GM12878 (cell line): ENCODE measurements at regions of chr11 and their contacts with region 1.

Region 1: GRCh38 chr11:107565219-107565937 is at the start of gene ALKBH8:
- DNase-seq: peak; percentile 50
- ATAC-seq: peak; percentile 89
- H3K4me3 ChIP-seq: peak within 1 kb of the TSS; percentile 71
- H3K27ac ChIP-seq: peak within 1 kb of the TSS; percentile 89
- H3K4me1 ChIP-seq: peaks cover 25% of the 10 kb centered on the region
- H3K27me3 ChIP-seq: no peaks in the 10 kb centered on the region
- CTCF ChIP-seq: no peak; a peak in 1 of 6 replicates
- EP300 ChIP-seq: no peak
- POLR2A ChIP-seq: peak; percentile 73
- RAD21 ChIP-seq: no peak
- polyA plus RNA-seq, gene ALKBH8: 4.6 to 4.7 TPM

Region 2: GRCh38 chr11:107598225-107599139 is 33.1 kb after region 1 on chr11:
- CTCF ChIA-PET with region 1: interaction called, 13 read pairs
- POLR2A ChIA-PET with region 1: no interaction called
- RAD21 ChIA-PET with region 1: no interaction called
- SMC1A ChIA-PET with region 1: interaction called, 5 read pairs
- in situ Hi-C with region 1: no loop called
- intact Hi-C with region 1: no loop called
- DNase-seq: no peak
- ATAC-seq: peak; percentile 99
- H3K4me3 ChIP-seq: no peak overlapping the region
- H3K27ac ChIP-seq: no peak overlapping the region
- H3K4me1 ChIP-seq: no peaks in the 10 kb centered on the region
- H3K27me3 ChIP-seq: peaks cover 0 to 4% of the 10 kb centered on the region in 2 experiments; a peak in 1 of 4 replicates
- CTCF ChIP-seq: peak; percentile 60 to 77 (median 66)
- EP300 ChIP-seq: no peak
- POLR2A ChIP-seq: no peak
- RAD21 ChIP-seq: 0 out of 2 replicates have a peak, but pooled peaks have one; percentile 25

Region 3: DNA sequence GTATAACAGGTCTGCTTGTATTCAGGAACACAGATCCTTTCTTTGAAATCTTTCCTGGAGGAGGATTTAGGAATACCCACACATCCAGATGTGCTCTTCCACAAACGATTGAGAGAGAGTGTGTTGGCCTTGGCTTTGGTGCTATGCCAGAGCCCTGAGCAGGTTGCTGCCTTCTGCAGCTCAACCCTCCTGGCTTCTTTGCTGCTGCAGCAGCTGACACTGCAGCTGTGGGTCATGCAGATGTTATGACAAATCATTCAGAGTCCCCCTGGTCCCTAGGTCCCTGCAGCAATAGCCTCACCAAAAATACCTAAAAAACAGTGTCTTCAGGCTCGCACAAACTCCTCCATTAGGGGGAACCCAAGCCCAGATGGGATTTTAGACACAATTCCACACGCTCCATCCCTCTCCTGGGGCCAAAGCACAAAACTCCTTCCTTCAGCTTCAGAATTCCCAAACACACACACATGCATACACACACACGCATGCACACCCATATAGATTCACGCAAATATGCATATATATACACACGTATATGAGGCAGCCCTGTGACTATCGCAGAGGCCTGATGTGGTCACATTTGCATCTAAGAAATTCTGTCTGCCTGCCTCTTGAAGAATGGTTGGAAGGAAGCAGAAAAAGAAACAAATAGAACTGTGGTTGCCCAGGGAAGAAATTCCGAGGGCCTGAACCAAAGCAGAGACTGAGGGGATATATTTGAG is 111.1 kb after region 1 on chr11:
- CTCF ChIA-PET with region 1: interaction called, 40 read pairs
- POLR2A ChIA-PET with region 1: interaction called, 5 read pairs
- RAD21 ChIA-PET with region 1: interaction called, 4 read pairs
- SMC1A ChIA-PET with region 1: interaction called, 249 read pairs
- in situ Hi-C with region 1: no loop called
- intact Hi-C with region 1: no loop called
- DNase-seq: no peak
- ATAC-seq: peak; percentile 29
- H3K4me3 ChIP-seq: no peak overlapping the region
- H3K27ac ChIP-seq: no peak overlapping the region
- H3K4me1 ChIP-seq: no peaks in the 10 kb centered on the region
- H3K27me3 ChIP-seq: no peaks in the 10 kb centered on the region
- CTCF ChIP-seq: no peak
- EP300 ChIP-seq: no peak
- POLR2A ChIP-seq: no peak
- RAD21 ChIP-seq: no peak

Region 4: GRCh38 chr11:107741044-107741823 is 175.9 kb after region 1 on chr11:
- CTCF ChIA-PET with region 1: interaction called, 10 read pairs
- POLR2A ChIA-PET with region 1: no interaction called
- RAD21 ChIA-PET with region 1: interaction called, 8 read pairs
- SMC1A ChIA-PET with region 1: interaction called, 9 read pairs
- in situ Hi-C with region 1: no loop called
- intact Hi-C with region 1: no loop called
- DNase-seq: peak; percentile 25
- ATAC-seq: peak; percentile 98
- H3K4me3 ChIP-seq: no peak overlapping the region
- H3K27ac ChIP-seq: no peak overlapping the region
- H3K4me1 ChIP-seq: no peaks in the 10 kb centered on the region
- H3K27me3 ChIP-seq: no peaks in the 10 kb centered on the region
- CTCF ChIP-seq: peak; percentile 80 to 92 (median 87)
- EP300 ChIP-seq: no peak
- POLR2A ChIP-seq: no peak
- RAD21 ChIP-seq: peak; percentile 81

Region 5: DNA sequence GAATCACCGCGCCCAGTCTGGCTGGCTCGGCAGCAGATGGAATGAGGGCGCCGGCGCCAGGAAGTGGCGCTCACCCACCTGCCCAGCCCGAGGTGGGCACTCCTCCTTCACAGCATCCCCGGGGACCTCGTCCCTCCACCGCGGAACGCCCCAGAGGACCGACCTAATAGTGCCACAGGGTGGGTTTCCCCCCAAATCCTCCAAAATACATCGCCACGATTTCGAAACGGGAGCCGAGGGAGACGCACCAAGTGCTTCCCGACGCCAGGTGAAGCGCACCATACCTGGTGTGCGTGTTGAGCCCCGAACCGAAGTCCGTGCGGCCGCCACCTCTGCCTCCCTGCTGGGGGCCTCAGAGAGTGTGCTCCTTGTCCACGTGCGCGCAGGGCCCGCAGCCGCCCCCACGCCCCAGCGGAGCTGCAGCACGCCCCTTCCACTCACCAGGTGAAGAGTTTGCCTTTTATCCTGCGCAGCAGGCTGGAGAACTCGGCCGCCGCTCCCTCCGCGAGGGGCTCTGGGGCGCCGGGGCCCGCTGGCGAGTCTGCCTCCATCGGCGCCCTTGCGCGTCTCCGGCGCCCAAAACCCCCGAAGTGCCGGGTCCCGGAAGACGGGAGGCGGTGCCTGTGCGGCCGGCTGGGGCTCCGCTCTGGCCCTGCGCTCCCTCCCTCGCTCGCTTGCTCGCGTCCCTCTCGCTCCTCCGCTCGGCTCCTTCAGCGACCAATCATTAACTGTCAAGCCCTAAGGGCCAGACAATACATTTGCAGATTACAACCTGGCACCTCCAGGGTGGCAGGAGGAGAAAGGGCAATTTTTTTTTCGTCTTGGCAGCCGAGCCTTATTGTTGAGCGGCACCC is 293.1 kb after region 1 on chr11 and contains the start of gene SLC35F2:
- CTCF ChIA-PET with region 1: no interaction called
- POLR2A ChIA-PET with region 1: no interaction called
- RAD21 ChIA-PET with region 1: interaction called, 3 read pairs
- SMC1A ChIA-PET with region 1: no interaction called
- in situ Hi-C with region 1: no loop called
- intact Hi-C with region 1: loop called (anchors 2 kb)
- DNase-seq: peak; percentile 80
- ATAC-seq: peak; percentile 92
- H3K4me3 ChIP-seq: peak within 1 kb of the TSS; percentile 93
- H3K27ac ChIP-seq: peak within 1 kb of the TSS; percentile 66
- H3K4me1 ChIP-seq: peaks cover 11% of the 10 kb centered on the region; the same call in 1 of the 2 replicates
- H3K27me3 ChIP-seq: no peaks in the 10 kb centered on the region
- CTCF ChIP-seq: peak in 2 of 3 experiments; percentile 12 to 19; a peak in 3 of 6 replicates
- EP300 ChIP-seq: no peak
- POLR2A ChIP-seq: peak; percentile 90
- RAD21 ChIP-seq: no peak
- polyA plus RNA-seq, gene SLC35F2: 15.2 to 25.8 TPM

Region 6: DNA sequence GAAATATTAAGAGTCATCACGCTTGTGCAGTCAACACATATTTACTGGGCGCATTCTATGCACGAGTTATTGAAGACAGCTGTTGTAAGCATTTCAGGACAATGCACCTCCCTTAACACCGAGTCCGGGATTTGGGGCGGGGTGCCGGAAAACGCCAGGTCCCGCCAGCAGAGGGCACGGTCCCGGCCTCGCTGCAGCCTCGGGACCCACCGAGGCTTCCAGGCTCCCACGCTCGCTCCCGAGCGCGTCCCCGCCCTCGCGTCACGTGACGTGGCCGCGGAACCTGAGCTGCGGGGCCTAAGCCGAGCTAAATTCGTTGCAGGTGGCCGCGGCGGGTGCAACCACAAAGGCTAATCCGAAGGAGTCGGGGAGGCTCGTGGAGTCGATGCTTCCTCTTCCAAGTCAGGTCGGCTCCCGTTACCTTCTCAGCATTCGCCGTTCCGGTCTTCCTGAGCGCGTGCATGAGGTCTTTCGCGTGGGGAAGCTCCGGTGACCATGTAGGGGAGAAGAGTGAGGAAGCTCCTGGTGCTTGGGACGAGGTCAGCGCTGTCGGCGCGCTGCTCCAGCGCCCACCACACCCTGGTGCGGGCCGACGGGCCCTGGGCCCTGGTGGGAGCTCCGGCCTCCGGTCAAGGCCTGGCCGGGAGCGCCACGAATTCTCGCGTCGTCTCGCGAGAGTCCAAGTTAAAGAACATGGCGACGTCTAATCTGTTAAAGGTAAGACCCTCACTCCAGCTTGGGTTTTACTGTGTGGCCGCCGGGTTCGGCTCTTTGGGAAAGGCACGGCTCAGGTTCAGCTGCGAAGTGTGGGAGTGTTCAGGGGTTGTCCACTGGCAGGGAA is 443.5 kb after region 1 on chr11 and contains the start of gene CUL5:
- CTCF ChIA-PET with region 1: no interaction called
- POLR2A ChIA-PET with region 1: no interaction called
- RAD21 ChIA-PET with region 1: no interaction called
- SMC1A ChIA-PET with region 1: no interaction called
- in situ Hi-C with region 1: no loop called
- intact Hi-C with region 1: loop called (anchors 10 kb)
- DNase-seq: peak; percentile 60
- ATAC-seq: peak; percentile 89
- H3K4me3 ChIP-seq: peak within 1 kb of the TSS; percentile 80
- H3K27ac ChIP-seq: peak within 1 kb of the TSS; percentile 80
- H3K4me1 ChIP-seq: no peaks in the 10 kb centered on the region
- H3K27me3 ChIP-seq: no peaks in the 10 kb centered on the region
- CTCF ChIP-seq: peak; percentile 86 to 93 (median 90)
- EP300 ChIP-seq: no peak; a peak in 1 of 4 replicates
- POLR2A ChIP-seq: peak; percentile 94
- RAD21 ChIP-seq: peak; percentile 54
- polyA plus RNA-seq, gene CUL5: 9.1 to 11.8 TPM